Heart right ventricle (tissue), 16 donors: ENCODE measurements at regions of chr10 and their contacts with region 1.

Region 1: DNA sequence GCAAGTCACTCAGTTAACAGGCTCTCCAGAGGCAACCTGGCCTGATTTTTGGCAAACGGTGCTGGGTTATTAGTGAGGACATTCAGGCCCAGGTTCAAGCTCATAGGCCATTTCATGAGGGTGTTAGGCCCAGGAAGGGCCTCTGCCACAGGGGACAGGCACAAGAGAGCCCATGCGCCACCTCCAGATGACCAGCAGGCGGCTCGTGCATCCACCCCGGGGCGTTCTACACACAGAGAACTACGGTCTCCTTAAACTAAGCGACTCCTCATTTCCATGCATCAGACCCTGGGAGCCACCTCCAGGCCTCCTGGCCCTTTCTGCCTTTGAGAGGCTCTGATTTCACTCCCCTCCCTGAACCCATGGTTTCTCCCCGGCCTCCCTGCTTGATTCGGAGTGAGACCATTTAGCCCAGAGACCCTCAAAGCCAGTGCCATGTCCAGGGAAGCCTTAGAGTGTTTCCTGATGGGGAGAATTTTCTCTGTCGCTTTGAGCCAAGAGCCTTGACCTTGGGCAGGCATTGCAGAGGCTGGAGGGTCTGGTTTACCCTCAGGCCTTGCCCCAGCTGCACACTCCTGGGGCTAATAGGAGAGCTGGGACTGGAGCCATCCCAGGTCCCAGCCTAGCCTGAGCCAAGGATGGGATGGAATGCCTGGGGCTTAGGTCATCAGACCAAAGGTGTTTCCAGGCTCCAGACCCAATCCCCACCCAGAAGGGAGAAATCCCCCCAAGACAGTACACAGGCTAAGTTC is 188.0 kb downstream of the GRID1 start:
- DNase-seq: no peak
- ATAC-seq: peak in 1 of 8 donors; percentile 50
- H3K4me3 ChIP-seq: no peak overlapping the region
- H3K27ac ChIP-seq: no peak overlapping the region
- H3K4me1 ChIP-seq: no peaks in the 10 kb centered on the region
- H3K27me3 ChIP-seq: peaks cover 0 to 7% (median 0%) of the 10 kb centered on the region in 7 donors
- CTCF ChIP-seq: peak in 3 of 9 donors; percentile 17 to 23 (median 21)

Region 2: GRCh38 chr10:86127274-86127819 is 51.2 kb before region 1 on chr10:
- intact Hi-C with region 1: loop called in 1 of 10 experiments (anchors 5 kb)
- DNase-seq: no peak
- ATAC-seq: no peak
- H3K4me3 ChIP-seq: no peak overlapping the region
- H3K27ac ChIP-seq: no peak overlapping the region
- H3K4me1 ChIP-seq: no peaks in the 10 kb centered on the region
- H3K27me3 ChIP-seq: peaks cover 0 to 7% (median 0%) of the 10 kb centered on the region in 7 donors
- CTCF ChIP-seq: no peak